ENCODE measurements at regions of chr4 and their contacts with region 1.

Region 1: DNA sequence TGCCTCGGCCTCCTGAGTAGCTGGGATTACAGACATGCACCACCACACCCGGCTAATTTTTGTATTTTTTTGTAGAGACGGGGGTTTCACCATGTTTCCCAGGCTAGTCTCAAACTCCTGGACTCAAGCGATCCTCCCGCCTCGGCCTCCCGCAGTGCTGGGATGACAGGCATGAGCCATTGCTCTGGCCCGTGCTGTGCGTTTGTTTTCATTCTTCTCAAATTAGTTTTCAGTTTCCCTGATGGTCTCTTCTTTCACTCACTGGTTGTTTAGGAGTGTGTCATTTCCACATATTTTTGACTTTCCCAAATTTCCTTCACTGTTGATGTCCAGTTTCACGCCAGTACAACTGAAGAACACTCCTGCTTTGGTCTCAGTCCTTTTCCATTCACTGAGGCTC is 31.8 kb downstream of the SH3TC1 start:
- DNase-seq: no peak
- H3K4me3 ChIP-seq: no peak overlapping the region
- CTCF ChIP-seq: no peak

Region 2: DNA sequence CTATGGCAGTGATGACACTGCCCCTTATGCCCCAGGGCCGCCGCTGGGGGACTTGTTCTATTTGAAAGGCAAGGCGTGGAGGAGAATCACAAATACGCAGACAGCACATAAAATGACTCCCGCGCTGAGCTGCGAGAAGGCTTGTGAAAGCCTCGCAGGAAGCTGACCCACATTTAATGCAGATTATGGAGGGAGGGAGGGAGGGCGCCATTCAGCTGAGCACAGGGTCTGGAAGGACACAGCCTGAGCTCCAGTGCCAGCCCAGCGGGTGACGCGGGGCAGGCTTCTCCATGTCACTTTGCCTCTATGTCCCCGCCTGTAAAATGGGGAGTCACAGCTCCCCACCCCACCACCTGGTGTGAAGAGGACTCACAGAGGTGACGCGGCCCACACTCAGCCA is 86.5 kb before region 1 on chr4:
- in situ Hi-C with region 1: no loop called
- DNase-seq: no peak
- H3K4me3 ChIP-seq: no peak overlapping the region
- CTCF ChIP-seq: no peak

Region 3: GRCh38 chr4:8308856-8309771 is 78.2 kb after region 1 on chr4:
- in situ Hi-C with region 1: loop called (anchors 5 kb)
- DNase-seq: no peak
- H3K4me3 ChIP-seq: no peak overlapping the region
- CTCF ChIP-seq: no peak

Measured in astrocyte of the cerebellum (primary cell).